ENCODE measurements at regions of chr7 and their contacts with region 1.

Region 1: DNA sequence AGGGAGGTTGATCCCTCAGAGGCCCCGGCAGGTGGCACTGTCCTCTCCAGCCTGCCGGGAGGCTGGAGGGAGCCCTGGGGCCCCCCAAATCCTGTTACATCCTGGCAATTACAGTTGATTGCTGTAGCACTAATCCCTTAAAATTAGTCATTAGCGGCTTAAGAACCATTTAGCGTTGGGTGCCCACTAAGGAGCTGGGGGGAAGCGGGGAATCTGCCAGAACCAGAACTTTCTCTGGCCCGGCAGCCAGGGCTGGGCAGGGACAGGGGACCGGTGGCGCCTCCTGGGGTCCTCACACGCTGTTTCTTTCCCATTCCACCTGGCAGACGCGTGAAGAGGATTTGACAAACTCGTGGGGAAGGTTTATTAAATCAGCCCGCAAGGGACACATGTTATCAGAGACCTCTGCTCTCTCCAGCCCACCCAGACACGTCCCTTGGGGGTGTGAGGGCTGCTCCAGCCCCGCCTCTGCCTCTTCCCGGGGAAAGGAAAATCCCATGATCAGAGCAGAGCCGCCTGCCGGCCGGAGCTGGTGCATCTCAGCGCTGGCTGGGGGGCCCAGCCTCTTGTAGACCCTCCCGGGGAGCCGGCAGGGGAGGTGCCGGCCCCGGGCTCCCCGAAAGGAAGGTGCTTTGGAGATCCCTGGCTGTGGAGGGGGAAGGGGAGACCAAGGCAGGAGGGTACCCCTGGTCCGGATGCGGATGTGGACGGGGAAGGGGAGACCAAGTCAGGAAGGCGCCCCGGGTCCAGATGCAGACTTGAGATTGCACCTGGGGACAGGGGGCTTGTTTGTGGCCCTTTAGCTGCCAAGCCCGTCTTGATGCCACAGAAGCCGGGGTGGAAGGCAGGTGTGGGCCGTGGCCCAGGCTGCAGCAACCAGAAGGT is 142.7 kb downstream of the ELFN1 start:
- DNase-seq: peak; percentile 30
- ATAC-seq: peak; percentile 88
- H3K4me3 ChIP-seq: no peak overlapping the region; a peak in 1 of 6 replicates
- H3K27ac ChIP-seq: peak overlapping the region; percentile 51
- H3K4me1 ChIP-seq: peaks cover 51% of the 10 kb centered on the region
- H3K27me3 ChIP-seq: no peaks in the 10 kb centered on the region
- CTCF ChIP-seq: peak; percentile 76
- EP300 ChIP-seq: no peak
- POLR2A ChIP-seq: no peak
- RAD21 ChIP-seq: no peak

Region 2: GRCh38 chr7:1579481-1580421 is 233.0 kb before region 1 on chr7:
- CTCF ChIA-PET with region 1: no interaction called
- POLR2A ChIA-PET with region 1: no interaction called
- in situ Hi-C with region 1: no loop called
- intact Hi-C with region 1: no loop called
- DNase-seq: peak; percentile 41
- ATAC-seq: peak; percentile 98
- H3K4me3 ChIP-seq: no peak overlapping the region
- H3K27ac ChIP-seq: no peak overlapping the region
- H3K4me1 ChIP-seq: no peaks in the 10 kb centered on the region
- H3K27me3 ChIP-seq: peaks cover 0 to 12% of the 10 kb centered on the region in 2 experiments; a peak in 3 of 5 replicates
- CTCF ChIP-seq: peak; percentile 96
- EP300 ChIP-seq: no peak
- POLR2A ChIP-seq: no peak
- RAD21 ChIP-seq: peak; percentile 86

Region 3: DNA sequence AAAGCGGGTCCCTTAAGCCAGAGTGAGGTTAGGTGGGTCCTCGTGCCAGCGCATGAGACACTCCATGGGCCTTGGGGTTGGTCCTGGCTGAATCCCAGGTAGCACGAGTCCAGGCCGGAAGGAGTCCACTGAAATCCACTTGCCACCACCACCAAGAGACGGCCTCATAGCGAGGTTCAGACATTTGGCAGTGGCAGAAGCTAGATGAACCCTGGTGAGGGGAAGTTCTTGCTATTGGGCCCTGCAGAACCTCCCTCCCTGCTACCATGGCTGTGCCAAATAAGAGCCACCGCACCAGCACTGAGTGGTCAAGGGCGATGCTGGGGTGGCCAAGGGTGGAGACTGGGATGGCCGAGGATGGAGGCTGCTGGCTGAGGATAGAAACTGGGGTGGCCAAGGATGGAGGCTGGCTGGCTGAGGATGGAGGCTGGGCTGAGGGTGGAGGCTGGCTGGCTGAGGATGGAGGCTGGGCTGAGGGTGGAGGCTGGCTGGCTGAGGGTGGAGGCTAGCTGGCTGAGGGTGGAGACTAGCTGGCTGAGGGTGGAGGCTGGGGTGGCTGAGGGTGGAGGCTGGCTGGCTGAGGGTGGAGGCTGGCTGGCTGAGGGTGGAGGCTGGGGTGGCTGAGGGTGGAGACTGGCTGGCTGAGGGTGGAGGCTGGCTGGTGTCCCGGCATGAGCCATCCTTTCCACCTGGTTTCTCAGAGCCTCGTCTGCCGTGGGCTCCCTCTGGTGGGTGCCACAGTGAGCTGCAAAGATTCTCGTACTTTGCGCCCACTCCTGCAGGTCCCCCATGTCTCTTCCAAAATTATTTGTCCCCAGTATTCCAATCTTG is 54.5 kb before region 1 on chr7:
- CTCF ChIA-PET with region 1: no interaction called
- POLR2A ChIA-PET with region 1: no interaction called
- in situ Hi-C with region 1: no loop called
- intact Hi-C with region 1: no loop called
- DNase-seq: peak; percentile 45
- ATAC-seq: peak; percentile 78
- H3K4me3 ChIP-seq: no peak overlapping the region
- H3K27ac ChIP-seq: no peak overlapping the region
- H3K4me1 ChIP-seq: peaks cover 34% of the 10 kb centered on the region
- H3K27me3 ChIP-seq: peaks cover 3 to 7% of the 10 kb centered on the region in 2 experiments; a peak in 3 of 5 replicates
- CTCF ChIP-seq: peak; percentile 83
- EP300 ChIP-seq: no peak
- POLR2A ChIP-seq: no peak
- RAD21 ChIP-seq: peak; percentile 80

Region 4: DNA sequence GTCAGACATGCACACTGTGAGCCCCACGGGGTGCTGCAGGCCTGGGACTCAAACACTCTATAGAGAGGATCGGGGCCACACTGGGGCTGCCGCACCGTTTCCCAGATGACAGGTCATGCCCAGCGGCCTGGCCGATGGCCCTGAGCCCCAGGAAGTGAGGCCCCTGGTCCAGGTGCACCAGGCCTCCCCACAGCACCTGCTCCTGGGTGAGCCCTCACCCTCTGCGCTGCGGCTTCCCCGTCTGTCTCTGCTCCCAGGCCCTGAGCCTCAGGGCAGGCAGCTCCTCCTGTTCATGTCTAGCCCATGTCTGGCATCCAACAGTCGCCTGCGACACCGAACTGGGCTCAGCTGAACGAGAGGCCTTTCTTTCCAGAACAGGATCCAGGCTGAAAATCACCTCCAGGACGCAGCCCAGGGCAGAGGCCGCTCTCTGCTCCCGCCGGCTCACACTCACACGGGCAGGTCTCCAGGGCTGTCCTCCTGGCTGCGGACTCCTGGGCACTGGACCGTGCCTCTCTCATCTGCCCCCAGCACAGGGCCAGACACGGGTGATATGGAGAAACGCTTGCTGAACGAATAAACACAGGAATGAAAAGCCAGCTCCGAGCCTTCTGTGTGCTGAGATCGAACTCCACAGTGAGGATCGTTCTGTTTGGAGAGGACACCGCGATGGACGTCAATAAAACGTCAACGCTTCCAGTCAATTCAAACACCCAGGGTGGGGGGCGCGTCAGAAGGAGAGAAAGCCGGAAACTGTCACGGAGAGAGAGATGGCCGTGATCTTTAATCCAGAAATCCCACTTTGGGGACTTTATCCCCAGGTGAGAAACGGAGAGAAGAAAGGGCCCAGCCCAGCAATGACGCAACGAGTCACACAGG is 59.7 kb after region 1 on chr7:
- CTCF ChIA-PET with region 1: no interaction called
- POLR2A ChIA-PET with region 1: no interaction called
- in situ Hi-C with region 1: loop called (anchors 5 kb)
- intact Hi-C with region 1: no loop called
- DNase-seq: peak; percentile 16
- ATAC-seq: peak; percentile 12
- H3K4me3 ChIP-seq: peak overlapping the region in 1 of 3 experiments; percentile 31; a peak in 1 of 6 replicates
- H3K27ac ChIP-seq: peak overlapping the region; percentile 71
- H3K4me1 ChIP-seq: peaks cover 57% of the 10 kb centered on the region
- H3K27me3 ChIP-seq: no peaks in the 10 kb centered on the region
- CTCF ChIP-seq: no peak
- EP300 ChIP-seq: no peak
- POLR2A ChIP-seq: no peak
- RAD21 ChIP-seq: no peak

Region 5: GRCh38 chr7:1925349-1925748 is 112.6 kb after region 1 on chr7:
- CTCF ChIA-PET with region 1: no interaction called
- POLR2A ChIA-PET with region 1: no interaction called
- in situ Hi-C with region 1: no loop called
- intact Hi-C with region 1: loop called (anchors 5 kb)
- DNase-seq: peak; percentile 9
- ATAC-seq: no peak
- H3K4me3 ChIP-seq: no peak overlapping the region
- H3K27ac ChIP-seq: no peak overlapping the region
- H3K4me1 ChIP-seq: peaks cover under 1% of the 10 kb centered on the region; the same call in 1 of the 2 replicates
- H3K27me3 ChIP-seq: no peaks in the 10 kb centered on the region
- CTCF ChIP-seq: peak; percentile 64
- EP300 ChIP-seq: no peak
- POLR2A ChIP-seq: no peak
- RAD21 ChIP-seq: no peak

Region 6: DNA sequence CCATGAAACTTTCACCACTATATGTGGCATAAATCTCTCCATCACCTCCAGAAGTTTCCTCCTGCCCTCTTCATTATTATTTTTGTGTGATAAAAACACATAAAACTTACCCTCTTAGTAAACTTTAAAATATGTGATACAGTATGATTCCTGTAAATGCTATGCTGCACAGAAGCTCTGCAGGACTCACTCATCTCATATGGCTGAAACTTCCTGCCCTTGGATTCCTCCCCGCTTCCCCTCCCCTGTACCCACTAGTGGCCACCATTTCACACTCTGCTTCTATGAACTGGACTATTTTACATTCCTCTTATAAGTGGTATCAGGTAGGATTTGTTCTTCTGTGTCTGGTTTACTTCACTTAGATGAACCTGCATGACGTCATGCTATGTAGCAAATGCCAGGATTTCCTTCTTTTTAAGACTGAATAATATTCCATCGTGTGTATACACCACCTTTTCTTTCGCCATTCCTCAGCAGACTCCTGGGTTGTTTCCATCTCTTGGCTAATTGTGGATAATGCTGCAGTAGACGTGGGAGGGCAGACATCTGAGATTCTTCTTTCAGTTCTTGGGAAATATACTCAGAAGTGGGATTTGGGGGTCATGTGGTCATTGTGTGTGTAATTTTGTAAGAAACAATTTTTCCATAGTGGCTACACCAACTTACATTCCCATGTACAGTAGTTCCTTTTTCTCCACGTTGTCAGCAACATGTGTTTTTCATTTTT is 1823.5 kb after region 1 on chr7:
- CTCF ChIA-PET with region 1: no interaction called
- POLR2A ChIA-PET with region 1: no interaction called
- in situ Hi-C with region 1: no loop called
- intact Hi-C with region 1: no loop called
- DNase-seq: no peak
- ATAC-seq: no peak
- H3K4me3 ChIP-seq: no peak overlapping the region
- H3K27ac ChIP-seq: no peak overlapping the region
- H3K4me1 ChIP-seq: no peaks in the 10 kb centered on the region
- H3K27me3 ChIP-seq: no peaks in the 10 kb centered on the region
- CTCF ChIP-seq: no peak
- EP300 ChIP-seq: no peak
- POLR2A ChIP-seq: no peak
- RAD21 ChIP-seq: no peak

Measured in HepG2 (cell line).